A673 (cell line): ENCODE measurements at regions of chr14 and their contacts with region 1.

Region 1: DNA sequence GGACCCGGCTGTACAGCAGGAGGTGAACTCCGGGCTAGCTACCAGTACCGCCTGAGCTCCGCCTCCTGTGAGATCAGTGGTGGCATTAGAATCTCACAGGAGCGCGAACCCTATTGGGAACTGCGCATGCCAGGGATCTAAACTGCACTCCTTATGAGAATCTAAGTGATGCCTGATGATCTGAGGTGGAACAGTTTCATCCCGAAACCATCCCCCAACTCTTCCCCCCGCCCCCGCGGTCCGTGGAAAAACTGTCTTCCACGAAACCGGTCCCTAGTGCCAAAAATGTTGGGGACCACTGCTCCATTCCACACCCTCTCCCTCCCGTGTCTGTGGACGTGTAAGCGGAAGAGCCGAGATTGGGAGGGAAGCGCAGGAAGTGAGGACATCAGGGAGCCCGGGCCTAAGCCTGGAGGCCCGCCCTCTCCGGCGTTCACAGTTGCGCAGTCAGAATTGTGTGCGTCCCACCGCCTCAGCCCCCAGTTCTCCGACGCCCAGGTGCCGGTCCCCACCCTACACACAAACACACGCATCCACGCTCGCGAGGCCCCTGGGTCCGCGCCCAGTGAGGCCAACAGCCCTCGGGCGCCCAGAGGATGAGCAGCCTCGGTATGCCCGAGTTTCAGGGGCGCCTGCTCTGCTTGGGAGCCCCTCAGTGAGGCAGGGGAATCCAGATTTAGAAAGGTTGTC is 1.8 kb upstream of the RNASE4 start:
- DNase-seq: peak; percentile 95
- H3K4me3 ChIP-seq: peak overlapping the region; percentile 79
- H3K27ac ChIP-seq: peak overlapping the region; percentile 96
- H3K4me1 ChIP-seq: peaks cover 16% of the 10 kb centered on the region
- H3K27me3 ChIP-seq: no peaks in the 10 kb centered on the region
- CTCF ChIP-seq: no peak

Region 2: DNA sequence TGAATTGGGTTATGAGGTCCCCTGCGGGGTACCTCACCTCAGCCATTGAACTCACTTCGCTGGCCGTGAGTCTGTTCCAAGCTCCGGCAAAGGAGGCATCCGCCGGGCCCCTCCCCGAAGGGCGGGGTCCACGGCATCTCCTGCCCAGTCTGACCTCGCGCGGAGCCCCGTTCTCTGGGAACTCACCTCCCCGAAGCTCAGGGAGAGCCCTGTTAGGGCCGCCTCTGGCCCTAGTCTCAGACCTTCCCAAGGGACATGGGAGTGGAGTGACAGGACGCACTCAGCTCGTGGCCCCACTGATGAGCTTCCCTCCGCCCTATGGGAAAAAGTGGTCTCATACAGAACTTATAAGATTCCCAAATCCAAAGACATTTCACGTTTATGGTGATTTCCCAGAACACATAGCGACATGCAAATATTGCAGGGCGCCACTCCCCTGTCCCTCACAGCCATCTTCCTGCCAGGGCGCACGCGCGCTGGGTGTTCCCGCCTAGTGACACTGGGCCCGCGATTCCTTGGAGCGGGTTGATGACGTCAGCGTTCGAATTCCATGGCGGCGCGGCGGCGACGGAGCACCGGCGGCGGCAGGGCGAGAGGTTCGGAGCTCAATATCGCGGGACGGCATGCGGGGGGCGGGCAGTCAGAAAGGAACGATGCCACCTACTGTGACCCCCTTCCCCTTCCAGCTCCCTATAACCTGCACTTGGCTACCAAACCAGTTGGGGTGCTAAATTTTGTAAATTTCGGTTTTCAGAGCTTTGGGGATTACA is 339.3 kb before region 1 on chr14 and contains the start of gene PARP2:
- CTCF ChIA-PET with region 1: interaction called, 14 read pairs
- POLR2A ChIA-PET with region 1: no interaction called
- intact Hi-C with region 1: loop called (anchors 2 kb)
- DNase-seq: peak; percentile 100
- H3K4me3 ChIP-seq: peak within 1 kb of the TSS; percentile 73
- H3K27ac ChIP-seq: peak within 1 kb of the TSS; percentile 91
- H3K4me1 ChIP-seq: peaks cover 4% of the 10 kb centered on the region
- H3K27me3 ChIP-seq: no peaks in the 10 kb centered on the region
- CTCF ChIP-seq: no peak
- total RNA-seq, gene PARP2: 67.8 and 67.9 TPM in 2 replicates

Region 3: DNA sequence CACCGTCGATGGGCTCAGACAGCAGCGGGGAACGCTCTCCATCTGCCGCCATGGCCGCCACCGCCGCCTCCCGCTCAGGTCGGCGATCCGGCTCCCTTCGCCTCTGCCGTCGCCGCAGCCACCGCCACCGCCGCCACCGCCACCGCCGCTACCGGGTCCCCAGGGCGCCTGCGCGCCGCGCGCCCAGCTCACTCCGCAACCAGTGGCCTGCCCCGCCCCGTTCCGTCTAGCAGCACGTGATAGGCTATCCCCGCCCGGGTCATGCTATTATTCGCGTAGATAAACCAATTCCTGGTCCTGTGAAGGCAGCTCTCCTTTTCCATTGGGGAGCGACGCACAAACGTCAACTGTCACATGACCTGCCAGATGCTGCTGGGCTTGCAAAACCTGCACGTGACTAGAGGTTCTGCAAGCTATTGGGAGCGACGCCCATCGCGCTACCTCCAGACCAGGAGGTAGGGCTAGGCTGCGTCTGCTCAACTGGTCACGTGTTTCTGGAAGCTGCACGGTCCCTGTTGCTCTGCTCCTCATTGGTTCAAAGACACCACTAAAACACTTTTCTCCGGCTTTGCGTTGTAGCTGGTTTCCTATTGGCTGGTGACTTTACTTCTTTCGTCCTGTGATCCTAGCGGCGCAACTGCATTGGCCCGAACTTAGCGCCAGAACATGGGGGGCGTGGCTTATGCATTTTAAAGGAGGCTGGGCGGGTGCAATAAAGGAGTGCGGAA is 221.1 kb before region 1 on chr14 and contains the start of gene PIP4P1:
- CTCF ChIA-PET with region 1: no interaction called
- POLR2A ChIA-PET with region 1: no interaction called
- intact Hi-C with region 1: loop called (anchors 5 kb)
- DNase-seq: peak; percentile 100
- H3K4me3 ChIP-seq: peak within 1 kb of the TSS; percentile 86
- H3K27ac ChIP-seq: peak within 1 kb of the TSS; percentile 91
- H3K4me1 ChIP-seq: peaks cover 16% of the 10 kb centered on the region
- H3K27me3 ChIP-seq: no peaks in the 10 kb centered on the region
- CTCF ChIP-seq: no peak
- total RNA-seq, gene PIP4P1: 32.4 and 34.9 TPM in 2 replicates

Region 4: DNA sequence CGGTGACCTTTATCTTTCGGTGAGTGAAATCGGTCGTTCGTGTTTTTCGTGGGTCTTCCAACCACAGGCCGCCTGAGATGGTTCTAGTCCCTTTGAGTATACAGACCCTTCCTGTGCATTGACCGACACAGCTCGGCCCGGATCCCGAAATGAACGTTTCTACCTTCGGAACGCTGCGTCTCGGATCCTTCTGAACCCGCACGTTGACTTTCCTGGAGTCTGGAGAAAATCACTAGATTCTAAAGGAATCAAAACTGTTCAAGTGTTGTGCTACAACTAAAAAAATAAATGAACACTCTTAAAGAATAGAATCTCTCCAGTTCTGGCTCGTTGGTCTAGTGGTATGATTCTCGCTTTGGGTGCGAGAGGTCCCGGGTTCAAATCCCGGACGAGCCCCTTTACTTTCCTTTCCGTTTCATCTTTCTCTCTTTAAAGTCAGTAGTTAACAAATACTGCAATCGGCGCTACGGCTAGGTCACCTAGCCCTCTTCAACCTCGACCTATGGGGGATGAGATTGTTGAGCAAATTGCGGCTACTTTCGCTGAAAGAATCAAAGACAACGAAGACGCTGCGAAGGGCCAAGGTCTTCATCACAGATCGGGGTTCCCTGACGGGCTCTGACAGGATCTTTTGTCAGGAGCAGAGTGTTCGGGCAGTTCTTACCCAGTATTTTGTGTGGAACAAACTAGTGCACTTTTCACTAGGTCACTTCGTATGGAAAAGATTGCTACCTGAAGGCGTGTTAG is 49.7 kb before region 1 on chr14:
- CTCF ChIA-PET with region 1: no interaction called
- POLR2A ChIA-PET with region 1: no interaction called
- intact Hi-C with region 1: loop called (anchors 1 kb)
- DNase-seq: peak; percentile 96
- H3K4me3 ChIP-seq: peak overlapping the region; percentile 58
- H3K27ac ChIP-seq: no peak overlapping the region
- H3K4me1 ChIP-seq: peaks cover 7% of the 10 kb centered on the region
- H3K27me3 ChIP-seq: peaks cover 6% of the 10 kb centered on the region
- CTCF ChIP-seq: no peak